G401 (cell line): ENCODE measurements at regions of chr2 and their contacts with region 1.

Region 1: DNA sequence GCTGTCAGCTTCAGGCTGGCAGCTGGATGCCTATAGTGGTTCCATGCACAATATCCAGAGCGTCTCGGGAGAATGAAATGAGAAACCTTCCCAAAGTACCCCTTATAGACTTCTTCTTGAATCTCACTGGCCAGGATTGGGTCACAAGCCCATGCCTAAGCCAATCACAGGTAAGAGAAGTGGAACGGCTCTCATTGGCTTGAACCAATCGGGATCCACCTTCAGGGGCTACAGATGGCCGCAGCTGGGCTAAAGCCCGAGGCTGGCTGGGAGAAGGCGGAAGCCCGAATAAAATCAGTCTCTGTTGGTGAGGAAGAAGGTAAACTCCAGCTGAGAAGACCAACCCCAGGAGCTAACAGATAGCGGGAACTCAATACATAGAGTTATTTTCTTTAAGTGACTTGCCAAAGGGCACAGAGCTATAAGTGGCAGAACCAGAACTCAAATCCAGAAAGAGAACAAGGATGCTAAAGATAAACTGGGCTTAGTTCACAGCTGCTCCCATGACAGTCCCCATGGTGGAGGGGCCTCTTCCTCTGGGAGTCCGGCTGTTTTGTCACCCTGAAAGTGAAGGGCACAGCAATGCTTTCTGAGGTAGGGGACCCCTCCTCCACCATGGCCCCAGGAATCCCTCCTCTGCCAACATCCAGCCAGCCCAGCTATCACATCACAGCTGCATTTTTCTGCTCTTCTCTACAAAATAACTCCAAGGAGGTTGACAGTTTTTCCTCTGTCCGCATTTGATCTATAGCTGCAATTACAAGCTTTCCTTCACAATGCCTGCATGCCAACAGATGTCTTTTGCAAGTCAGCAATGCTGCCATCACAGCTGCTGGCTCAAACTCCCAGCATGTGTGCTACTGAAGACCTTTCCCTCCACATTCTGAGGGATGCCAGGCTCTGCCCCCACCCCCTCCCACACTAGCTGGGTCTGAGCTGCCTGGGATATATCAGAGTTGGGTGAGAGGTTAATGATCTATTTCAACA is 52.0 kb downstream of the MCFD2 start:
- DNase-seq: no peak

Region 2: DNA sequence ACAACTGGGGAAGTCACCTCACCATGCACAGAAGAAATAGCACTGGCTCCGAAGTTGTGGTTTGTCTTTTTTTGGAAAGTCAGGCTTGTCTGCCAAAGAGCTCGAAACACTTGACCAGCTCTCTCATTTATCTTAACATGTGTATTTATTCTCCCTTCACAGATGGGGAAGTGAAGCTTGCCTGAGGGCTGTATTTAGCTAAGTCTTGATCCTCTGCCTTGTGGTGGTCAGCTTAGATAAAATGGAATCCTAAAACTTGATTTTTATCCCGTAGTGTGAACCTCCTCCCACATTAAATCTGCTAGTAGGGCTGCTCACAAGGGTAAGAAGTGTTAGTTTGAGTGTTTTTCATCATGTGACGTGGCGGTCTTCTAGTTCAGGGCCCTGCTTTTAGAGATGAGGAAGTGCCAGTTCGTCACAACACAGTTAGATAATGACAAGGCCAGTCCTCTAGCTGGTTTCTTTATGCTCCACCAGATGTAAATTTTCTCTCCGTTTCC is 294.5 kb before region 1 on chr2:
- in situ Hi-C with region 1: no loop called
- DNase-seq: no peak

Region 3: GRCh38 chr2:46806526-46806925 is 57.1 kb before region 1 on chr2:
- in situ Hi-C with region 1: loop called (anchors 5 kb)
- DNase-seq: no peak

Region 4: DNA sequence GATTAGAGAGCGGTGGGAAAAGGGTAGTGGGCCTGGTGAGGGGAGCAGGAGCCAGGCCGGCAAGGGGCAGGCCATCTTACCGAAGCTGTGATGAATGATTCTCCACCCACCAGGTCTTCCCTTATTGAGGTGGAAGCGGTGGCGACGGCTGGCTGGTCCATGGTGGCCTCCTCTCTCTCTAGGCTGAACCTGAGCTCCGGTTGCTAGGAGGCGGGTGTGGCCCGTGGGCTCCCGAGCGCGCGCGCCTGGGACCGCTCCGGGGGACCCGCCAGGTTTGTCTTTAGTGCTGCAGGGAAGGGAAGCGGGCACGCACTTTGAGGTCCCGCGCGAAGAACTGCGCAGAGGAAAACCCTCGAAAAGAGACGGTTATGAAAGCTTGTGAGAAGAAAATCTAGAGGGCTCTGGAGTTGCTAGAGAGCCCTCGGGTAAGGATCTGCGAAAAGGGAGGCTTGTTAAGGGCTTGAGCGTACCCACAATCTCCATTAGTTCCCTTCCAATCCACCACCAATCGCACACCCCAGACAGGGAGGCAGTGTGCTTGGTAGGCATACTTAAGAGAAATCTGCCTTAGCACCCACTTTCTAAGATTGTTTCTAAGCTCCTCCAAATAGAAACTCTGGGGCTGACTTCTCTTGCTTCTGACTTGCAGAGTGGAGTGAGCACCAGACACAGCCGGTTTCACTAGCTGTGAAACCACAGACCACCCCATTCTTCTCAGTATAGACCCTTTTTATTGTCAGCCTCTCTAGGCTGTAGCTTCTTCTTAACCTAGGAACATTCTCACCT is 291.7 kb after region 1 on chr2 and contains the start of gene STPG4:
- in situ Hi-C with region 1: no loop called
- DNase-seq: no peak
- total RNA-seq, gene STPG4: not detected in 2 replicates